ENCODE measurements at regions of chr16 and their contacts with region 1.

Region 1: GRCh38 chr16:89171463-89172170 is at the start of gene CDH15:
- DNase-seq: peak; percentile 92
- H3K4me3 ChIP-seq: peak within 1 kb of the TSS in 2 of 3 experiments; percentile 23 to 42
- H3K27ac ChIP-seq: no peak within 1 kb of the TSS
- H3K4me1 ChIP-seq: peaks cover 26% of the 10 kb centered on the region
- H3K27me3 ChIP-seq: no peaks in the 10 kb centered on the region
- CTCF ChIP-seq: no peak
- total RNA-seq, gene CDH15: 0.14 to 0.33 TPM

Region 2: GRCh38 chr16:88737298-88738150 is 434.1 kb before region 1 on chr16:
- CTCF ChIA-PET with region 1: no interaction called
- dilution Hi-C with region 1: no loop called
- in situ Hi-C with region 1: loop called in 1 of 2 experiments (anchors 10 kb)
- intact Hi-C with region 1: loop called (anchors 2 kb)
- DNase-seq: peak; percentile 29
- H3K4me3 ChIP-seq: no peak overlapping the region
- H3K27ac ChIP-seq: no peak overlapping the region
- H3K4me1 ChIP-seq: peaks cover 3% of the 10 kb centered on the region
- H3K27me3 ChIP-seq: no peaks in the 10 kb centered on the region
- CTCF ChIP-seq: peak; percentile 64 to 83

Region 3: GRCh38 chr16:88811769-88812512 is 359.7 kb before region 1 on chr16 and contains the start of gene APRT:
- CTCF ChIA-PET with region 1: no interaction called
- dilution Hi-C with region 1: no loop called
- in situ Hi-C with region 1: loop called (anchors 10 to 25 kb)
- intact Hi-C with region 1: loop called (anchors 1 kb)
- DNase-seq: peak; percentile 91
- H3K4me3 ChIP-seq: peak within 1 kb of the TSS; percentile 50 to 69 (median 67)
- H3K27ac ChIP-seq: peak within 1 kb of the TSS; percentile 14
- H3K4me1 ChIP-seq: peaks cover 29% of the 10 kb centered on the region
- H3K27me3 ChIP-seq: no peaks in the 10 kb centered on the region
- CTCF ChIP-seq: peak in 1 of 2 donors; percentile 38
- total RNA-seq, gene APRT: 51.5 to 136 TPM

Region 4: GRCh38 chr16:88941913-88942909 is 229.4 kb before region 1 on chr16:
- CTCF ChIA-PET with region 1: no interaction called
- dilution Hi-C with region 1: no loop called
- in situ Hi-C with region 1: loop called in 1 of 2 experiments (anchors 10 kb)
- intact Hi-C with region 1: loop called (anchors 1 kb)
- DNase-seq: no peak
- H3K4me3 ChIP-seq: no peak overlapping the region
- H3K27ac ChIP-seq: no peak overlapping the region
- H3K4me1 ChIP-seq: no peaks in the 10 kb centered on the region
- H3K27me3 ChIP-seq: peaks cover 42% of the 10 kb centered on the region
- CTCF ChIP-seq: peak; percentile 24 to 58